Caco-2 (cell line): ENCODE measurements at regions of chr5 and their contacts with region 1.

Region 1: DNA sequence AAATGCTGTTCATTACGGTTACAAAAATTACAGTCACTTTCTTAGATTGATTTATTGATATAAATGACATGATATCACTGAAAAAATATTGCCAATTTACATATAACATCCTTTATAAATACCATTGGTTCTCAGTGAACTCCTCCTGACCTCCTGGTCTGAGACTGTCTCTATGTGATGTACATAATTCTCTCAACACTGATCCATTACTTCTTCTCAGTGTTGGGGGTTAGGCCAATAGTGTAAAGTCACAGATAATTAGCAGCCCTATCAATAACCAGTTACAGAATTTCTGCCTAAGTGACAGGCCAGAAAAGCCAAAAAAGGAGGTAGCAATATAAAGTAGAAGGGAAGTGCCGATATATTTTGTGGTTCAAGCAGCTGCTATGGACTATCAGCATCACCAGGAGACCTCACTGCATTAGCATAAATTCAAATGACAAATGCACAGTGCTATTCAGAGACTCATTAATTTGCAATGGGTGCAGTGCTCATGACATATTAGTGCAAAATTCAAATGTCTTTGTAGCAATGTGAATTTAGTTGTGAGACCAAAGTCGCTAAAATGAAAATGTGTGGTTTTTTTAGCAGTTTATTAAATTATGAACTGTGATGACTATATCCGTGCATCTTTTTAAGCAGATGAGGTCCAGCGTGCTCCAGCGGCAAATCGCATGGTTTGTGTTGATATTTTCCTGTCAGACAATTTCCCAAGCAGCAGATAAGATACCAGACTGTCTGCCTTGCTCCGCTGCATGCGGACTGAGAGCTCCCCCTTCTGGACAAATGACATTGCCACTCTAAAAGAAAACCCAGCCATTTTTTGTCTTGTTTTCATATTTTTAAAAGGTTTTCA is 144.6 kb downstream of the CETN3 start:
- DNase-seq: peak; percentile 70 to 77
- H3K4me3 ChIP-seq: no peak overlapping the region
- H3K4me3 Mint-ChIP-seq: no peak overlapping the region
- H3K27ac Mint-ChIP-seq: no peak overlapping the region
- H3K4me1 ChIP-seq: 0 out of 2 replicates have a peak, but pooled peaks cover 10% of the 10 kb centered on the region
- H3K4me1 Mint-ChIP-seq: no peaks in the 10 kb centered on the region
- H3K27me3 ChIP-seq: no peaks in the 10 kb centered on the region
- H3K27me3 Mint-ChIP-seq: no peaks in the 10 kb centered on the region
- CTCF ChIP-seq: peak; percentile 92 to 93

Region 2: GRCh38 chr5:88729084-88729828 is 1535.7 kb before region 1 on chr5:
- CTCF ChIA-PET with region 1: no interaction called
- POLR2A ChIA-PET with region 1: no interaction called
- intact Hi-C with region 1: loop called (anchors 1 kb)
- DNase-seq: peak; percentile 58 to 68
- H3K4me3 ChIP-seq: no peak overlapping the region
- H3K4me3 Mint-ChIP-seq: no peak overlapping the region
- H3K27ac Mint-ChIP-seq: no peak overlapping the region
- H3K4me1 ChIP-seq: no peaks in the 10 kb centered on the region
- H3K4me1 Mint-ChIP-seq: no peaks in the 10 kb centered on the region
- H3K27me3 ChIP-seq: no peaks in the 10 kb centered on the region
- H3K27me3 Mint-ChIP-seq: peaks cover 3% of the 10 kb centered on the region
- CTCF ChIP-seq: peak; percentile 69 to 73

Region 3: DNA sequence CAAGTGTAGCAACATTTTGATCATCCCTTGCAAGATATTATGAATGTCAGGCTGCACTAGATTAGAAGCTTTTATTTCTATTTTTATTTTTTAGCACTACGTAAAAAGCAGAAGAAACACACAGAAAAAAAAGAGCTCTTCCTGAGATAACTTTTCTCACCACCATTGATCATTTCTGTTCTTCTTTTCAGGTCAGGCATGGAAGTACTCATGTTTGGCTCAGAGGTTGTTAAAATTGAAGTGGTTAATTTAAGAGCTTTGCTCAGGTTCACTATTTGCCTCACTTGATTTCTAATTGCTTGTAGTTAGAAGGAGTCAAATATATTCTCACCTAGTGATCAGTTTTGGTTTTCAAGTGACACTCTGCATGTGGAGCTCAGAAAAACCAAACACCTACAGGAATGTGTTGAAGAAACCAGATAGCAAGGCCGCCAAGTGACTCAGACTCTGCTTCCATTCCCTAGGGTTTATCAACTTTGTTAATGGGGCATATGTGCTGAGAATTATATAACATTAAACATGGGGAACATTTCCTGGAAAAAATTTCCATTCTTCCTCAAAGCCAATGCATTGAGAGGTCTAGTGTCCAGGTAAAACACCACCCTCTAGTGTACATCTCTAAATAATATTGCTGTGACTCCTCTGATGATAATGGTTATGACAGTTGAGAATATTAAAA is 535.2 kb before region 1 on chr5:
- CTCF ChIA-PET with region 1: no interaction called
- POLR2A ChIA-PET with region 1: no interaction called
- intact Hi-C with region 1: loop called (anchors 1 kb)
- DNase-seq: peak in 1 of 2 experiments; percentile 3
- H3K4me3 ChIP-seq: no peak overlapping the region
- H3K4me3 Mint-ChIP-seq: no peak overlapping the region
- H3K27ac Mint-ChIP-seq: no peak overlapping the region
- H3K4me1 ChIP-seq: no peaks in the 10 kb centered on the region
- H3K4me1 Mint-ChIP-seq: no peaks in the 10 kb centered on the region
- H3K27me3 ChIP-seq: no peaks in the 10 kb centered on the region
- H3K27me3 Mint-ChIP-seq: peaks cover 6% of the 10 kb centered on the region
- CTCF ChIP-seq: peak; percentile 32 to 35

Region 4: DNA sequence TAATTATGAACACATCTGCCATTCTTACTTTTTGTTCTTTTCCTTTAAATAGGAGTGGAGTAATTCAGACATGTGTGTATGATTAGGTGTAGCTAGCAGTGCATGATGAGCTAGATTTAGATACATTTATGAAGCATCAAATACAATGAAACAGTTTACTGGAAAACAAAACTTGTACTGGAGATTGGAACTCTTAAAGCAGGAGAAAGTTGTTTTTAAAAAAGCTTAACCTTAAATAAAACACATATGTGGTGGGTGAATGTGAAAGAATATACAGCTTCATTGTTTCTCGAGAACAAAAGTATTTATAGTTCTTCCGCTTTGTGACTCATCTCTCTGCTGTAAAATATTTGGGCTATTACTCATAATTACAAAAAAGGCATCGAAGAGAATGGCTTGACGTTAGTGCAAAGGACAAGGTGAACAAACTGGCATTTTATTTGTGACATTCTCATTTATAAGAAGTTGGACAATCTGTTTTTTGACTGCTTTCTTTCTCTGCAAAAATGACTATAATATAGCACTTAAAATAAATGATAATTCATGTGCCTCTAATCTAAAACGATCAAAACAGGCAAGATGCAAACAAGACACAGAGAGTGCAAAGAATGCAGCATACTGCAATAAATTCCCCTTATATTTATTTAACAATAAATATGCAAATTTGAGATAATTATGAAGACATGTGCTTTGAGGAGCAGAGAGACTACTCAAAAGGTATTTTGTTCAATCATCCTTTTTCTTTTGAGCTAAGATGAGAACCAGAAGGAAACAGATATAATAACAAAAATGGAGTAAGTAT is 334.1 kb before region 1 on chr5:
- CTCF ChIA-PET with region 1: no interaction called
- POLR2A ChIA-PET with region 1: no interaction called
- intact Hi-C with region 1: loop called (anchors 1 kb)
- DNase-seq: peak in 1 of 2 experiments; percentile 11
- H3K4me3 ChIP-seq: no peak overlapping the region
- H3K4me3 Mint-ChIP-seq: peak overlapping the region; percentile 52
- H3K27ac Mint-ChIP-seq: peak overlapping the region; percentile 58
- H3K4me1 ChIP-seq: peaks cover 24% of the 10 kb centered on the region
- H3K4me1 Mint-ChIP-seq: peaks cover 19% of the 10 kb centered on the region
- H3K27me3 ChIP-seq: no peaks in the 10 kb centered on the region
- H3K27me3 Mint-ChIP-seq: no peaks in the 10 kb centered on the region
- CTCF ChIP-seq: no peak

Region 5: DNA sequence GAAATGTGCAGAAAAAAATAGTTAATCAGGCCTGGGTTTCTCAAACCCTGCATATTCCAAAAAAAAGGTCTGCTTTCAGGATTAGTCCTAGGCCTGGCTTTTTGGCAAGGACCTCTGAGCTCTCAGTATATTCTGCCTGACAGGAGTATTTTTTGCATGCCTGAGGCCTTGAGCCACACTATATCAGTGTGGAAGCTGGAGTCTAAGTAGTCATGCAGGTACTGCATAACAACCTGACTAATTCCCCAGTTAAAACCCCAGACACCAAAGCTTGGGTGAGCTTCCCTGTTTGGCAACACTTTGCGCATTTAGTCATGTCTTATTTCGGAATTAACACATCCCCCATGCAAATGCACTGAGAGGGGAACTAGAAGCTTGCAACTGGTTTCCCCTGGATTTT is 214.8 kb before region 1 on chr5:
- CTCF ChIA-PET with region 1: no interaction called
- POLR2A ChIA-PET with region 1: no interaction called
- intact Hi-C with region 1: no loop called
- DNase-seq: no peak
- H3K4me3 ChIP-seq: no peak overlapping the region
- H3K4me3 Mint-ChIP-seq: no peak overlapping the region
- H3K27ac Mint-ChIP-seq: no peak overlapping the region
- H3K4me1 ChIP-seq: peaks cover 10% of the 10 kb centered on the region
- H3K4me1 Mint-ChIP-seq: no peaks in the 10 kb centered on the region
- H3K27me3 ChIP-seq: no peaks in the 10 kb centered on the region
- H3K27me3 Mint-ChIP-seq: no peaks in the 10 kb centered on the region
- CTCF ChIP-seq: no peak

Region 6: GRCh38 chr5:90191352-90192045 is 73.4 kb before region 1 on chr5:
- CTCF ChIA-PET with region 1: no interaction called
- POLR2A ChIA-PET with region 1: no interaction called
- intact Hi-C with region 1: loop called (anchors 2 kb)
- DNase-seq: peak; percentile 28 to 45
- H3K4me3 ChIP-seq: no peak overlapping the region
- H3K4me3 Mint-ChIP-seq: no peak overlapping the region
- H3K27ac Mint-ChIP-seq: peak overlapping the region; percentile 39
- H3K4me1 ChIP-seq: peaks cover 5% of the 10 kb centered on the region
- H3K4me1 Mint-ChIP-seq: peaks cover 11% of the 10 kb centered on the region
- H3K27me3 ChIP-seq: no peaks in the 10 kb centered on the region
- H3K27me3 Mint-ChIP-seq: no peaks in the 10 kb centered on the region
- CTCF ChIP-seq: no peak

Region 7: DNA sequence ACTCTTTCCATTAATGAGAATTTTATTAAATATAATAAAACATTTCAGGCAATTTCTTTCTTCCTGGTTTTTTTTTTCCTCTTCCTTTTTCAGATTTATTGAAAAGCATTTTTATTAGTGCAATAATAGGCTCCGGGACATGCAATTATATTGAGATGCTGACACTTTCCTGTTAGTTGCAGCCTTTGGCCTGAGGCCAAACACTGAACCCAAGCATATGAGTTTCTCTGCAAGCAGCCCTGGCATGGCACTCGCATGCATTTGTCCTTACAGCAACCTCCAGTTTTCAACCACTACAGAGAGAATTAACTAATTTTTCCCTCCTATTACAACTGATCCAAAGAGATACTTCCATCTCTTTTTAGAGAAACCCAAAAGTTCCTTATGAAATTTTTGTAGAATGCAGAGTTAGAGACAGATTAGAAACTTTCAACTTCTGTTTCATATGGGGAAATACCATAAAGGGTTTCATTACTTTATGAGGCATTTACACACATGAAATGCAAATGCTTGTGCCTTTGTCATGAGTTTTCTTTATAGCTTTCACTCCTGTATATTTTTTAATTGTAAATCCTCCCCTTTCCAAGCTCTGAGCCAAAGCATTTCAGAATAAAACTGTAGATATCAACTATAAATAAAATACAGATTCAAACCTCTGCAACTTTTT is 38.4 kb before region 1 on chr5:
- CTCF ChIA-PET with region 1: no interaction called
- POLR2A ChIA-PET with region 1: no interaction called
- intact Hi-C with region 1: no loop called
- DNase-seq: no peak
- H3K4me3 ChIP-seq: no peak overlapping the region
- H3K4me3 Mint-ChIP-seq: no peak overlapping the region
- H3K27ac Mint-ChIP-seq: no peak overlapping the region
- H3K4me1 ChIP-seq: no peaks in the 10 kb centered on the region
- H3K4me1 Mint-ChIP-seq: no peaks in the 10 kb centered on the region
- H3K27me3 ChIP-seq: no peaks in the 10 kb centered on the region
- H3K27me3 Mint-ChIP-seq: no peaks in the 10 kb centered on the region
- CTCF ChIP-seq: no peak

Region 8: GRCh38 chr5:90293931-90294330 is 29.0 kb after region 1 on chr5:
- CTCF ChIA-PET with region 1: no interaction called
- POLR2A ChIA-PET with region 1: no interaction called
- intact Hi-C with region 1: no loop called
- DNase-seq: peak; percentile 21 to 36
- H3K4me3 ChIP-seq: no peak overlapping the region
- H3K4me3 Mint-ChIP-seq: no peak overlapping the region
- H3K27ac Mint-ChIP-seq: no peak overlapping the region
- H3K4me1 ChIP-seq: peaks cover 16% of the 10 kb centered on the region
- H3K4me1 Mint-ChIP-seq: peaks cover 12% of the 10 kb centered on the region
- H3K27me3 ChIP-seq: no peaks in the 10 kb centered on the region
- H3K27me3 Mint-ChIP-seq: no peaks in the 10 kb centered on the region
- CTCF ChIP-seq: no peak

Region 9: DNA sequence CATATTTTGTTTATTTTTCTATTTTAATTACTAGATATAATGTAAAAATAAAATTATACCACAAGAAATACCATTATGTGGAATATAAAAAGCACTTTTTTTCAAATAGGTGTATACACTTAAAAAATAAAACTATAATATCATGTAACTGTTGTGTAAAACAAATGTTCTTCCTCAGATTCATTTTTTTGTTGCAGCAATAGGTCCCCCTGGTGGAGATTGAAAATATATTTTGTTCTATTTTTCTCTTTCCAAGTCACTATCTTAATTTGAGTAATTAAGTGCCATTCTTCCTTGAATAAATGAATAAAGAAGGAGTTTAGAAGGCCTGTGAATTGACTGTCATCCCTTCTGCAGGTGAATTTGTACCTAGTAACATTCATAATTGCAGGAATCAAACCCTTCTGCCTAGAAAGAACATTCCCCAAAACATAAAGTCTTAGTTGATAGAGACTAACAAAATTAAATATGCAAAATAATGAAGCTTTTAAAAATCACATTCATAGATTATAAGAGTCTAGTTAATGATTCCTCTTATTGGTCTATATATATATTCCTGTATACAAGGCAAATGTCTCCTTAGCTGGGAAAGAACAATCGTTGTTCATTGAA is 121.3 kb after region 1 on chr5:
- CTCF ChIA-PET with region 1: no interaction called
- POLR2A ChIA-PET with region 1: no interaction called
- intact Hi-C with region 1: loop called (anchors 1 kb)
- DNase-seq: peak in 1 of 2 experiments; percentile 15
- H3K4me3 ChIP-seq: no peak overlapping the region
- H3K4me3 Mint-ChIP-seq: no peak overlapping the region
- H3K27ac Mint-ChIP-seq: no peak overlapping the region
- H3K4me1 ChIP-seq: no peaks in the 10 kb centered on the region
- H3K4me1 Mint-ChIP-seq: peaks cover 6% of the 10 kb centered on the region
- H3K27me3 ChIP-seq: no peaks in the 10 kb centered on the region
- H3K27me3 Mint-ChIP-seq: no peaks in the 10 kb centered on the region
- CTCF ChIP-seq: peak; percentile 51 to 61

Region 10: DNA sequence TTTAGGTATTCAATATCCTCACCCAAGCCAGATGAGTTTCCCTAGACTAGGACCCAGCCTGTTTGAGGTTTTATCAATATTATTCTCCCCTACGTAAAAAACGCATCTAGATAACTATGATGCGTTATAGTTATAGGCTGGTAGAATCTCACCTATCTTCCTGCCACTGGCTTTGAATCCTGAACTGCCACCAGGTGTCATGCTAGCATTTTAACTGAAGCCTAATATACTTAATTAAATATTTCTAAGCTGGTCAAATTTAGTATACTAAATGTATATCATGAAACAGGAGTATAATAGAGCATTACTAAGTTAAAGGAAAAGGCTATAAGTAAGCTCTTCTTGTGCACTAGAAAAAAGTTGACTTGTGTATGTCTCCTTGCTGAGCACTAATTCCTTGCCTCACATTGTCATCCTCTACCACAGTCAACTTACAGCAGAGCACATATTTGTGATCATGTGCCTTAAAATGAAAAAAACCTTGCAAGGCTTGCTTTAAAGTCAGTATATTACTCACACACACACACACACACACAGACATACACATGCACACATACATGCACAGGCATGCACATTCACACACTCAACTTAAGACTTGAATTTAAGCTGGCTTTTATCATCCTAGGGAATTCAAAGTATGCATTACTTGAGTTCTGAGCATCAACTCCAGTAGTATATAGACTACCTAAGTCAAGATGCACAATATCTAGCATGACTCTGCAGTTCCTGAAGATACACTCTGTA is 597.1 kb after region 1 on chr5:
- CTCF ChIA-PET with region 1: no interaction called
- POLR2A ChIA-PET with region 1: no interaction called
- intact Hi-C with region 1: no loop called
- DNase-seq: no peak
- H3K4me3 ChIP-seq: no peak overlapping the region
- H3K4me3 Mint-ChIP-seq: no peak overlapping the region
- H3K27ac Mint-ChIP-seq: no peak overlapping the region
- H3K4me1 ChIP-seq: peaks cover 7% of the 10 kb centered on the region
- H3K4me1 Mint-ChIP-seq: peaks cover 6% of the 10 kb centered on the region
- H3K27me3 ChIP-seq: no peaks in the 10 kb centered on the region
- H3K27me3 Mint-ChIP-seq: no peaks in the 10 kb centered on the region
- CTCF ChIP-seq: peak in 1 of 2 experiments; percentile 28